ENCODE measurements at regions of chrX and their contacts with region 1.

Region 1: GRCh38 chrX:150982788-150983520 is at the start of gene HMGB3:
- DNase-seq: peak; percentile 91
- H3K4me3 Mint-ChIP-seq: peak within 1 kb of the TSS; percentile 68
- H3K27ac Mint-ChIP-seq: peak within 1 kb of the TSS; percentile 21
- H3K4me1 Mint-ChIP-seq: peaks cover 19% of the 10 kb centered on the region
- H3K27me3 Mint-ChIP-seq: no peaks in the 10 kb centered on the region
- total RNA-seq, gene HMGB3: 50.1 to 54.7 TPM

Region 2: GRCh38 chrX:150898343-150899190 is 84.4 kb before region 1 on chrX and contains the start of gene CD99L2:
- CTCF ChIA-PET with region 1: interaction called, 3 read pairs
- POLR2A ChIA-PET with region 1: interaction called, 10 read pairs
- DNase-seq: peak; percentile 91
- H3K4me3 Mint-ChIP-seq: peak within 1 kb of the TSS; percentile 87
- H3K27ac Mint-ChIP-seq: peak within 1 kb of the TSS; percentile 61
- H3K4me1 Mint-ChIP-seq: peaks cover 13% of the 10 kb centered on the region
- H3K27me3 Mint-ChIP-seq: peaks cover 9% of the 10 kb centered on the region
- total RNA-seq, gene CD99L2: 16.6 to 17.0 TPM

Region 3: GRCh38 chrX:150958177-150958576 is 24.8 kb before region 1 on chrX:
- CTCF ChIA-PET with region 1: no interaction called
- POLR2A ChIA-PET with region 1: no interaction called
- DNase-seq: no peak
- H3K4me3 Mint-ChIP-seq: no peak overlapping the region
- H3K27ac Mint-ChIP-seq: no peak overlapping the region
- H3K4me1 Mint-ChIP-seq: no peaks in the 10 kb centered on the region
- H3K27me3 Mint-ChIP-seq: no peaks in the 10 kb centered on the region